Activated CD4-positive, alpha-beta T cell treated with anti-CD3 and anti-CD28 coated beads for 36 hours (primary cell): ENCODE measurements at regions of chr9 and their contacts with region 1.

Region 1: DNA sequence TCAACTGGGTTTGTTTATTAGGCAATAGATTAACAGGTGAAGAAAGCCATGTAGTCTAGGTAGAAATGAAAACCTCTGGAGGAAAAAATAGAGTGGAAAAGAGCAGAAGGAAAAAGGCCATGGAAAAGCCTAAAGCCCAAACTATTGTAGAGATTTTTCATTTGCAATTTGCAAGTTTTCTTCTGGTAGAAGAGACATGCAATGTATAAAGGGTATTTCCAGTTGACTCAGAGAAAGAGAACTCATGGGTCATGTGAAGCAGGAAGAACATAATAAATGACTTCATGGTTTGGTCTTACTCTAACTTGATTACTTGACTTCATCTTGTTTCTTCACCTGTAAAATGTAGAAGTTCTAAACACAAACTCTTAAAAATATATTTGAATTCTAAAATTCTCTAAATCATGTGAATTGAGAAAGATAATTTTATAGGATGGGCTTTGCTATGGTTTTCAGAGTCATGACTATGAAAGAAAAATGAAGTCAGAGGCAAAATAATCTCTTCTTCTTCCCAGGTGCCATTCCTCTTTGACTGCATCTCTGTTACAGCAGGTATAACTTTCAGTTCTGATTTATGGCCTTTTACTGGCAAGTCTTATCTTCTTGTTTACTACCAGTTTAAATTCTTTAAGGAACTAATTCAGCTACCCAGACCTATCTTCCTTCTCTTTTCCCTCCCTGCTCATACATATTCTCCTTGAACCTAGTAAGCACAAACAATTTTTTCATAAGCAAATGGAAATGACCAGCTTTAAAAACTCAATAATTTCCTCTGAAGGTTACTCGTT is 47.7 kb upstream of the TMC1 start:
- DNase-seq: no peak
- ATAC-seq: peak; percentile 83
- H3K4me3 Mint-ChIP-seq: no peak overlapping the region
- H3K27ac Mint-ChIP-seq: peak overlapping the region; percentile 88
- H3K4me1 Mint-ChIP-seq: peaks cover 40% of the 10 kb centered on the region
- H3K27me3 Mint-ChIP-seq: no peaks in the 10 kb centered on the region

Region 2: GRCh38 chr9:71783120-71783530 is 690.5 kb before region 1 on chr9:
- CTCF ChIA-PET with region 1: no interaction called
- POLR2A ChIA-PET with region 1: no interaction called
- intact Hi-C with region 1: loop called in 1 of 2 experiments (anchors 5 kb)
- DNase-seq: peak; percentile 93
- ATAC-seq: peak; percentile 97
- H3K4me3 Mint-ChIP-seq: peak overlapping the region; percentile 68
- H3K27ac Mint-ChIP-seq: peak overlapping the region; percentile 98
- H3K4me1 Mint-ChIP-seq: peaks cover 48% of the 10 kb centered on the region
- H3K27me3 Mint-ChIP-seq: no peaks in the 10 kb centered on the region

Region 3: GRCh38 chr9:72443855-72444254 is 29.8 kb before region 1 on chr9:
- CTCF ChIA-PET with region 1: no interaction called
- POLR2A ChIA-PET with region 1: no interaction called
- intact Hi-C with region 1: loop called (anchors 2 kb)
- DNase-seq: peak; percentile 8
- ATAC-seq: peak; percentile 72
- H3K4me3 Mint-ChIP-seq: no peak overlapping the region
- H3K27ac Mint-ChIP-seq: peak overlapping the region; percentile 55
- H3K4me1 Mint-ChIP-seq: peaks cover 24% of the 10 kb centered on the region
- H3K27me3 Mint-ChIP-seq: no peaks in the 10 kb centered on the region

Region 4: DNA sequence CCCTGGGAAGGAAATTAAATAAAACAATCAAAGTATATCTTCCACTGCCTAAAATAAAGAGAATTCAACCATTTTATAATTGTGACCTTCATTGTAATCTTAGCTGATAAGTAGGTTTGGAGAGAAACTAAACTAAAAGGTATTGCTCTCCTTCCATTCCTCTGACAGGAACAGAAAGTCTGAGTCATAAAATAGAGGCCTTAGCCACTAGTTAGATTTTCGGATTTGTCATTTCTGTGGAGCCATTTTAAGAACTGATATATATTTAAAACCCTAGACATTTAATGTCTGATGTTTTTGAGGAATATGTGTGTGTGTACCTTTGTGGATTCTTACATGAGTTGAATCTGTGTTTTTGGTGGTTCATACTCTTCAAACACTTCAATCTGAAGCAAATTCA is 36.0 kb after region 1 on chr9:
- CTCF ChIA-PET with region 1: no interaction called
- POLR2A ChIA-PET with region 1: no interaction called
- intact Hi-C with region 1: loop called in 1 of 2 experiments (anchors 1 kb)
- DNase-seq: no peak
- ATAC-seq: peak; percentile 87
- H3K4me3 Mint-ChIP-seq: peak overlapping the region; percentile 29
- H3K27ac Mint-ChIP-seq: peak overlapping the region; percentile 87
- H3K4me1 Mint-ChIP-seq: peaks cover 17% of the 10 kb centered on the region
- H3K27me3 Mint-ChIP-seq: no peaks in the 10 kb centered on the region